Activated CD4-positive, alpha-beta T cell treated with anti-CD3 and anti-CD28 coated beads for 36 hours (primary cell): ENCODE measurements at regions of chr1 and their contacts with region 1.

Region 1: GRCh38 chr1:64744492-64745180 is at the start of gene RAVER2:
- DNase-seq: peak; percentile 72
- ATAC-seq: peak; percentile 79
- H3K4me3 Mint-ChIP-seq: peak within 1 kb of the TSS; percentile 76
- H3K27ac Mint-ChIP-seq: peak within 1 kb of the TSS; percentile 70
- H3K4me1 Mint-ChIP-seq: peaks cover 17% of the 10 kb centered on the region
- H3K27me3 Mint-ChIP-seq: peaks cover 5% of the 10 kb centered on the region
- total RNA-seq, gene RAVER2: 3.2 to 3.6 TPM

Region 2: DNA sequence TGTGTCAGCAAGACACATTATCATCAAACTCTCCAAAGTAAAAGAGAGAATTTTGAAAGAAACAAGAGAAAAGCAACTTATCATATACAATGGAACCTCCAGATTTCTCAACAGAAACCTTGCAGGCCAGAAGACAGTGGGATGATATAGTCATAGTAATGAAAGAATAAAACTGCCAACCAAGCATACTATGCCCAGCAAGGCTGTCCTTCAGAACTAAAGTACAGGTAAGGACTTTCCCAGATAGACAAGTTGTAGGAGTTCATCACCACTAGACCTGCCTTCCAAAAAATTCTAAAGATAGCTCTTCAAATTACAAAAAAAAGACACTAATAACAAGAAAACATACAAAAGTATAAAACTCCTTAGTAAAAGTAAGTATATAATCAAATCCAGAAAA is 1455.5 kb before region 1 on chr1:
- CTCF ChIA-PET with region 1: no interaction called
- POLR2A ChIA-PET with region 1: no interaction called
- intact Hi-C with region 1: no loop called
- DNase-seq: no peak
- ATAC-seq: no peak
- H3K4me3 Mint-ChIP-seq: no peak overlapping the region
- H3K27ac Mint-ChIP-seq: no peak overlapping the region
- H3K4me1 Mint-ChIP-seq: no peaks in the 10 kb centered on the region
- H3K27me3 Mint-ChIP-seq: peaks cover 4% of the 10 kb centered on the region

Region 3: GRCh38 chr1:64440183-64440826 is 304.3 kb before region 1 on chr1:
- CTCF ChIA-PET with region 1: no interaction called
- POLR2A ChIA-PET with region 1: no interaction called
- intact Hi-C with region 1: no loop called
- DNase-seq: no peak
- ATAC-seq: no peak
- H3K4me3 Mint-ChIP-seq: no peak overlapping the region
- H3K27ac Mint-ChIP-seq: no peak overlapping the region
- H3K4me1 Mint-ChIP-seq: no peaks in the 10 kb centered on the region
- H3K27me3 Mint-ChIP-seq: no peaks in the 10 kb centered on the region

Region 4: GRCh38 chr1:64686828-64687724 is 57.6 kb before region 1 on chr1:
- CTCF ChIA-PET with region 1: interaction called, 5 read pairs
- POLR2A ChIA-PET with region 1: no interaction called
- intact Hi-C with region 1: loop called in 1 of 2 experiments (anchors 2 kb)
- DNase-seq: peak; percentile 51
- ATAC-seq: peak; percentile 76
- H3K4me3 Mint-ChIP-seq: no peak overlapping the region
- H3K27ac Mint-ChIP-seq: no peak overlapping the region
- H3K4me1 Mint-ChIP-seq: peaks cover 5% of the 10 kb centered on the region
- H3K27me3 Mint-ChIP-seq: no peaks in the 10 kb centered on the region

Region 5: DNA sequence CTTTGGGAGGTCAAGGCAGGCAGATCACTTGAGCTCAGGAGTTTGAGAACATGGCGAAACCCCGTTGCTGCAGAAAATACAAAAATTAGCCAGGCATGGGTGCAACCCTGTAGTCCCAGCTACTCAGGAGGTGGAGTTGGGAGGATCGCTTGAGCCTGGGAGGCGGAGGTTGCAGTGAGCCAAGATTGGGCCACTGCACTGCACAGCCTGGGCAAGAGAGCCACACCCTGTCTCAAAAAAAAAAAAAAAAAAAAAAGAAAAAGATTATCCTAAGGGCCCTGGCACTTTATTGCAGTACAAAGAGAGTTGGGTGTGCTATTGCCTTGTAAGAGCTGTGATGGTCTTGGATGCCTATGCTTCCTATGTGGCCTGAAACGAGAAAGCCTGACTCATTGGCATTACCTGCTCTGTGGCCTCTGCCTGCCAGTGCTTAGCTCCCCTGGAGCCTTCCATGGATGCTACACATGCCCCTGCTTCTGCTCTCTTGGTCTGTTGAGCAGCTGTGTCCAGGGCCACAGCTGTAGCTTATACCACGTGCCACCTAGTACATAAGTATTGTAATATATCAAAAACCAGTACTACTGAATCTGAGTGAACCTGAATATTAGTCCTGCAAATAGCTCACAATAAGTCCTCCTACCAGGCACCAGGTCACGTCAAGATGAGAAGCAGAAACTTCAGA is 610.5 kb after region 1 on chr1:
- CTCF ChIA-PET with region 1: no interaction called
- POLR2A ChIA-PET with region 1: no interaction called
- intact Hi-C with region 1: no loop called
- DNase-seq: no peak
- ATAC-seq: no peak
- H3K4me3 Mint-ChIP-seq: no peak overlapping the region
- H3K27ac Mint-ChIP-seq: no peak overlapping the region
- H3K4me1 Mint-ChIP-seq: no peaks in the 10 kb centered on the region
- H3K27me3 Mint-ChIP-seq: peaks cover 2% of the 10 kb centered on the region